Mammary epithelial cell (primary cell): ENCODE measurements at regions of chr14 and their contacts with region 1.

Region 1: DNA sequence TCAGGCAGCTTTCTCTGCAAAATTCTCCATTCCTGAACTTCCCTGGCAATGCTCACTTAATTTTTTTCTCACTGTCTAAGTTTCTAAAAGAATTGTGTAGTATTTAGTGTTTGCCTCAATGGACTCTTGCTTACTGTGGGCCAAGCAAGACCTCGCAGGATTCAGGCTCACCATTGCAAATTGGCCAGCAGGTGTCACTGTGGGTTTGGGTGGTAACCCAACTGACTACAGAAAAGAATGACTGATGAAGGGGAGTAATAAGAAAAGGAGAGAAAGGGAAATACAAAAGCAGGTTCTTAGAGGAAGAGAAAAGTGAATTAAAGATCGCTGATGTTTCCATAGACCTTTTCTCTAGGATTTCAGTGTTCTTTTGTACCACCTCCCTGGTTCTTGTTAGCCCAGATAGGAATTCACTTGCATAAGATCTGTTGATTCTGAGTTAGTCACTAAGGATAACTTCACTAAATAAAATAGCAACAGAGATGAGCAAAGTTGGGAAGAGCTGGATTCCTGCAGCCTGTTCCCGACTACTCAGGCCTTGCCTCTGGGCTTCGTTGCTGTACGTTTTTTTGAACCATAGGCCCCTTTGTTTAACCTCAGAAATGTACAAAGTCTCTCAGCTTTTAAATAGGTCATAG is 386.5 kb upstream of the DDHD1 start:
- DNase-seq: peak; percentile 55
- H3K4me3 ChIP-seq: no peak overlapping the region
- H3K27ac ChIP-seq: no peak overlapping the region
- H3K4me1 ChIP-seq: peaks cover 5% of the 10 kb centered on the region
- H3K27me3 ChIP-seq: no peaks in the 10 kb centered on the region
- CTCF ChIP-seq: peak; percentile 74 to 90

Region 2: DNA sequence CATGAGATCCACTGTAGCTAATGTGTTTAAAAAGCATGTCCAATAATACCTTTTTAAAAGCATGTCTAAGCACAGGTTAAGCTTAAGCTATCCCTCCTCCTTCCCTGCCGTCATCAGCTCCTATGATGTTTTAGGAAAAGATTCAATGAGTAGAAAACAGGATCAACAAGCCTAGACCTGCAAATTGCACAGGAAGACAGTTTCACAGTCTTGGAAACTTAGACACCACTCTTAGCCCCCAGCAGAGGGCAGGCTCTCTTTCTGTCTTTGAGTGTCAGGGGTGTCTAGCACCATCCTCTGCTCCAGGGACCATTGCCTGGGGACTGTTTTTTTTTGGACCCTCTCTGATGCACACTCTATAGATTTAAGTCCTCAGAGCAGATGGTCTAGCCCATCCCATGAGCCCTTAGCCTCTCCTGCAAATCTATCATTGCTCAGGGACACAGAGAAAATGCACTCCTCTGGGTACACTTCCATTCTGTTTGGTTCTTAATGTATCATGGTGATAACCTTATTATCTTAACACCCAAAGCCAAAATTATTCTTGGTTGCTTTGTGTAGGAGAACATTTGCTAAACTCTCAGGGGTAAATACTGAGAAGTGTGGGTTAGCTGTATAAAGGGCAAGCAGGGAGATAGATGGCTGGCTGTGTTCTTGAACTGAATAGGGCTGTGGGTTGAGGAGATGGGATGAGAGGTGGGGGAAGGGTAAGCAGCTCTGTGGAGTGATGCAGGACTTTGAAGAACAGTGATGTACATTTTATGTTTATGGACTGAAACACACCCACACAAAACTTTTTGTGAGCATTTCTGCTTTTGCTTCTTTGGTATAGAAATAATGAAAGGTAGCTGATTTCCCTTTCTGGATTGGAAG is 126.6 kb before region 1 on chr14:
- CTCF ChIA-PET with region 1: no interaction called
- dilution Hi-C with region 1: no loop called
- in situ Hi-C with region 1: no loop called
- intact Hi-C with region 1: loop called (anchors 1 kb)
- DNase-seq: peak; percentile 73
- H3K4me3 ChIP-seq: no peak overlapping the region
- H3K27ac ChIP-seq: no peak overlapping the region
- H3K4me1 ChIP-seq: peaks cover 9% of the 10 kb centered on the region
- H3K27me3 ChIP-seq: no peaks in the 10 kb centered on the region
- CTCF ChIP-seq: peak; percentile 72 to 75

Region 3: DNA sequence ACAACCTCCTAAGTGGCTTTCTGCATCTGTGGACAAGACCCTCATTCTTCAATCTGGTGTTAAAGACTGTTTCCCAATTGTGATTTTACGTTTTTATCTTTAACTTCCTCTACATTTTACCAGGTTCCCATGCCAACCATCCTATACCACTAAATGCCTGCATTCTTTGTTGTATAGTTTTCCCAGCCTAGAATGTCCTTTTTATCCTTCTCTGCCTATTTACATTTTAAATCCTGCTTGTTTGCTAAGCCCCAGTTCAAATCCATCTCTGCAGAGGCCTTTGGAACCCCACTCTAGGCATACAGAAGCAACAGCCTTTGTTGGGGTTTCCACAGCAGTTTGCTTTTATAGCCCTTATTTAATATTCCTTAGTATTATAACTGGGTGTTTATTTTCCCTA is 61.4 kb before region 1 on chr14:
- CTCF ChIA-PET with region 1: no interaction called
- dilution Hi-C with region 1: no loop called
- in situ Hi-C with region 1: no loop called
- intact Hi-C with region 1: no loop called
- DNase-seq: no peak
- H3K4me3 ChIP-seq: no peak overlapping the region
- H3K27ac ChIP-seq: no peak overlapping the region
- H3K4me1 ChIP-seq: no peaks in the 10 kb centered on the region
- H3K27me3 ChIP-seq: no peaks in the 10 kb centered on the region
- CTCF ChIP-seq: no peak

Region 4: DNA sequence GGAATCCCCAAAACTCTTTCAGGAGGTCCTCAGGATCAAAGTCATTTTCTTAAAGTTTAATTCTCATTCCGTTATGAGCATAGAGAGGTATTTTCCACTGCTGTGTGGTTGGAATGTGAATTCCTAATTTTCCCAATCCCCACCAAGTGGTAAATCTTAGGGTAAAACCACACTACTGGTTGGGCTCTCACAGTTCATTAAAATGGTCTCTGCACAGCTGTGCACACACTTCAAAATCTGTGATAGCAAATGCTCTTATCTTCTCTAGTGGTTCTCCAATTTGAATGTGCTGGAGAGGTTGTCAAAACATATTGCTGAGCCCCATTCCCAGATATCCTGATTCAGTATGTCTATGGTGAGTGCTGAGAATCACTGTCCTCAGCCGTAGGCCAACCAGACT is 228.0 kb after region 1 on chr14:
- CTCF ChIA-PET with region 1: no interaction called
- dilution Hi-C with region 1: no loop called
- in situ Hi-C with region 1: no loop called
- intact Hi-C with region 1: loop called (anchors 5 kb)
- DNase-seq: no peak
- H3K4me3 ChIP-seq: no peak overlapping the region
- H3K27ac ChIP-seq: no peak overlapping the region
- H3K4me1 ChIP-seq: no peaks in the 10 kb centered on the region
- H3K27me3 ChIP-seq: peaks cover 5% of the 10 kb centered on the region
- CTCF ChIP-seq: no peak

Region 5: GRCh38 chr14:53953002-53953827 is 413.6 kb after region 1 on chr14:
- CTCF ChIA-PET with region 1: interaction called, 5 read pairs
- dilution Hi-C with region 1: no loop called
- in situ Hi-C with region 1: no loop called
- intact Hi-C with region 1: loop called (anchors 5 kb)
- DNase-seq: peak; percentile 59
- H3K4me3 ChIP-seq: peak overlapping the region; percentile 48 to 67 (median 59)
- H3K27ac ChIP-seq: peak overlapping the region; percentile 56
- H3K4me1 ChIP-seq: peaks cover 17% of the 10 kb centered on the region
- H3K27me3 ChIP-seq: no peaks in the 10 kb centered on the region
- CTCF ChIP-seq: no peak

Region 6: GRCh38 chr14:54169254-54169924 is 629.8 kb after region 1 on chr14:
- CTCF ChIA-PET with region 1: no interaction called
- dilution Hi-C with region 1: no loop called
- in situ Hi-C with region 1: loop called in 1 of 2 experiments (anchors 25 kb)
- intact Hi-C with region 1: no loop called
- DNase-seq: peak; percentile 89
- H3K4me3 ChIP-seq: no peak overlapping the region
- H3K27ac ChIP-seq: peak overlapping the region; percentile 89
- H3K4me1 ChIP-seq: peaks cover 42% of the 10 kb centered on the region
- H3K27me3 ChIP-seq: no peaks in the 10 kb centered on the region
- CTCF ChIP-seq: no peak

Region 7: DNA sequence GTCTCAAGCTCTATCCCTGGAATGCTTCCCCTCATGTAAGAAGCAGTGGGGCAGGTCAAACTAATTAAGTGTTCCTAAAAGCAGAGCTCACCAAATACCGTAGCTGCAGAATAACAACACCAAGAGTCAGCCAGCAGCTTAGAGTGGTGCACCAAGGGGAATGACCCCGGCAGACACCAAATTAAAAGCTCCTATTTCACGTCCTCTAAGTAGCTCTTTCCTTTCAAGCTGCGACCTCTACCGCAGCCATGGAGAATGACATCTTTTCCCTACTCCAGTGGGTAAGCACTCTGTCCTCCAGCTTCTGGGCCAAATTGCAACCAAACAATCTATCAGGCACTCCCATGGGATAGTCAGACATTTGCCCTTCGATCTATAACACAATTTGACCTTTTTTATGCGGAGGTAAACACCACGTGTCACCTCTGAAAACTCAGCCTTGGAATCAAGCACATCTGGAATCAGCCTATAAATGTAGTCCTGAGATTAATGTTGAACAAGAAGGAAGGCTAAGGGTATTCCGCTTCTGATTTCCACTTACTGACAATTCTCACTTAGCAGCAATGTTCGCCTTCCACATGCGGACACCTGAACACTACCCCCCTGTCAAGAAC is 789.6 kb after region 1 on chr14:
- CTCF ChIA-PET with region 1: no interaction called
- dilution Hi-C with region 1: no loop called
- in situ Hi-C with region 1: loop called (anchors 10 kb)
- intact Hi-C with region 1: loop called (anchors 2 kb)
- DNase-seq: peak; percentile 51
- H3K4me3 ChIP-seq: no peak overlapping the region
- H3K27ac ChIP-seq: no peak overlapping the region
- H3K4me1 ChIP-seq: peaks cover 10% of the 10 kb centered on the region
- H3K27me3 ChIP-seq: no peaks in the 10 kb centered on the region
- CTCF ChIP-seq: peak; percentile 88 to 94

Region 8: GRCh38 chr14:54347997-54348611 is 808.5 kb after region 1 on chr14:
- CTCF ChIA-PET with region 1: no interaction called
- dilution Hi-C with region 1: no loop called
- in situ Hi-C with region 1: no loop called
- intact Hi-C with region 1: loop called (anchors 1 kb)
- DNase-seq: peak; percentile 29
- H3K4me3 ChIP-seq: no peak overlapping the region
- H3K27ac ChIP-seq: no peak overlapping the region
- H3K4me1 ChIP-seq: no peaks in the 10 kb centered on the region
- H3K27me3 ChIP-seq: no peaks in the 10 kb centered on the region
- CTCF ChIP-seq: peak; percentile 73 to 82